Endothelial cell of umbilical vein (primary cell): ENCODE measurements at regions of chr6 and their contacts with region 1.

Region 1: DNA sequence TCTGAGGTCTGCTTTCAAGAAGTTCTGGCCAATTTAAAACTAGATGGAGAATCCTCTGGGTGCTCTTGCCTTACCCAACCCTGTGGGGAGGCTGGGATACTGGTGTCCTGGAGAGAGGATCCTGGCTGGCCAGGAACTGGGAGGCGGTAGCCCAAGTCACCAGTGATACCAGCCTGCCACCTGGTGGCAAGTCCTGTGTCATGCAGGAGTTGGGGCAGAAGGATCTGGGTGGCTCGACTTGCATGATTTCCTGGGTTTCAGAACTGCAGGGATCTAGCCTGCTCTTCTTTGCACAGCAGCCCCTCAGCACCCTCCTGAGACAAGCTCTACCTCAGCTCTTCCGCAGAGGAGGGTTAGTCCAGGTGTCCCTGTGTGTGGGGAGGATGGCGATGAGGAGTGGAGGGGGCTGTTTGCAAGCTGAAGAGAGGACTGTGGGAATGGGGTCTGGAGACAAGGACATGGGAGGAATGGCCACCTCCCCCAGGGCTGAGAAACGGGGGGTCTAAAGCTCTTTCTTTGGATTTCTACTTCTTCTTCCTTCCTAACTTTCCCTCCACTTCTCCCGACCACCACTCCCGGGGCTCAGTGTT is 4.2 kb downstream of the KCNK17 start:
- DNase-seq: peak; percentile 55
- H3K4me3 ChIP-seq: no peak overlapping the region
- H3K27ac ChIP-seq: no peak overlapping the region
- H3K4me1 ChIP-seq: no peaks in the 10 kb centered on the region
- H3K27me3 ChIP-seq: peaks cover 19 to 24% of the 10 kb centered on the region in 2 experiments
- CTCF ChIP-seq: peak; percentile 80 to 90
- POLR2A ChIP-seq: no peak

Region 2: DNA sequence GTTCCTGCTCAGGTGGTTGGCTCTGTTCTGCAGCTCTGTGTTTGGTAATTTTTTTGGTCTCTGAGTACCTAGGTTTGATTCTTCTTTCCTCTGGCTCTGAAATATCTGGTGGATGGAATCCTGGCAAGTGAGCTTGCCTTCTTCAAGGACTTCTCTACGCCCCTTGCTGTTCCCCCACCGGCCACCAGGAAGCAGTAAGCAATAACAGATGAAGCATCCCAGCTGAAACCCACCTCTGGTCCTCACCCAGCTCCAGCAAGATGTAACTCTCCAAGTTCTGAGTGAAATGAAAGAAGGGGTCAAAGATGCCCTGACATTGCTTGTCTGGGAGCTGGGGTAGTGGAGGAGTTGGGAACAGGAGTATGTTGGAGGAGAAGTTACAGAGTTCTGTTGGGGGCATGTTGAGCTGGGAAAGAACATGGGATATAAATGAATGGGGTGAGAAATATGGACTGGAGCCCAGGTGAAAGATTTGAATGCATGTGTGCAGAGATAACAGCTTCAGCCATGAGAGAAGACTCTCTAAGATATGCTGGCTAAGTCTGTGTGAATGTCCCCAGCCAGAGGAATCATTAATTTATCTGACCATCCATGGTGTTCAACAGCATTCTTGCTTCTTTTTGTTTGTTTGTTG is 312.8 kb before region 1 on chr6:
- CTCF ChIA-PET with region 1: interaction called, 38 read pairs
- POLR2A ChIA-PET with region 1: no interaction called
- dilution Hi-C with region 1: no loop called
- intact Hi-C with region 1: loop called (anchors 1 kb)
- DNase-seq: peak; percentile 18
- H3K4me3 ChIP-seq: no peak overlapping the region
- H3K27ac ChIP-seq: no peak overlapping the region
- H3K4me1 ChIP-seq: no peaks in the 10 kb centered on the region
- H3K27me3 ChIP-seq: peaks cover 4 to 9% of the 10 kb centered on the region in 2 experiments
- CTCF ChIP-seq: peak; percentile 37 to 67
- POLR2A ChIP-seq: no peak

Region 3: GRCh38 chr6:39166189-39166911 is 143.7 kb before region 1 on chr6:
- CTCF ChIA-PET with region 1: interaction called, 223 read pairs
- POLR2A ChIA-PET with region 1: no interaction called
- dilution Hi-C with region 1: no loop called
- intact Hi-C with region 1: loop called (anchors 1 kb)
- DNase-seq: peak; percentile 48
- H3K4me3 ChIP-seq: no peak overlapping the region
- H3K27ac ChIP-seq: no peak overlapping the region
- H3K4me1 ChIP-seq: no peaks in the 10 kb centered on the region
- H3K27me3 ChIP-seq: no peaks in the 10 kb centered on the region
- CTCF ChIP-seq: peak; percentile 89 to 92
- POLR2A ChIP-seq: no peak

Region 4: GRCh38 chr6:39289490-39289889 is 20.5 kb before region 1 on chr6:
- CTCF ChIA-PET with region 1: no interaction called
- POLR2A ChIA-PET with region 1: no interaction called
- dilution Hi-C with region 1: no loop called
- intact Hi-C with region 1: no loop called
- DNase-seq: no peak
- H3K4me3 ChIP-seq: no peak overlapping the region
- H3K27ac ChIP-seq: no peak overlapping the region
- H3K4me1 ChIP-seq: no peaks in the 10 kb centered on the region
- H3K27me3 ChIP-seq: no peaks in the 10 kb centered on the region
- CTCF ChIP-seq: no peak
- POLR2A ChIP-seq: no peak

Region 5: GRCh38 chr6:39553860-39554802 is 244.1 kb after region 1 on chr6:
- CTCF ChIA-PET with region 1: no interaction called
- POLR2A ChIA-PET with region 1: no interaction called
- dilution Hi-C with region 1: no loop called
- intact Hi-C with region 1: no loop called
- DNase-seq: no peak
- H3K4me3 ChIP-seq: no peak overlapping the region
- H3K27ac ChIP-seq: no peak overlapping the region
- H3K4me1 ChIP-seq: no peaks in the 10 kb centered on the region
- H3K27me3 ChIP-seq: no peaks in the 10 kb centered on the region
- CTCF ChIP-seq: no peak
- POLR2A ChIP-seq: no peak

Region 6: GRCh38 chr6:40371621-40372020 is 1061.6 kb after region 1 on chr6:
- CTCF ChIA-PET with region 1: no interaction called
- POLR2A ChIA-PET with region 1: no interaction called
- dilution Hi-C with region 1: no loop called
- intact Hi-C with region 1: no loop called
- DNase-seq: no peak
- H3K4me3 ChIP-seq: no peak overlapping the region
- H3K27ac ChIP-seq: no peak overlapping the region
- H3K4me1 ChIP-seq: no peaks in the 10 kb centered on the region
- H3K27me3 ChIP-seq: no peaks in the 10 kb centered on the region
- CTCF ChIP-seq: no peak
- POLR2A ChIP-seq: no peak